ENCODE measurements at regions of chr10 and their contacts with region 1.

Region 1: DNA sequence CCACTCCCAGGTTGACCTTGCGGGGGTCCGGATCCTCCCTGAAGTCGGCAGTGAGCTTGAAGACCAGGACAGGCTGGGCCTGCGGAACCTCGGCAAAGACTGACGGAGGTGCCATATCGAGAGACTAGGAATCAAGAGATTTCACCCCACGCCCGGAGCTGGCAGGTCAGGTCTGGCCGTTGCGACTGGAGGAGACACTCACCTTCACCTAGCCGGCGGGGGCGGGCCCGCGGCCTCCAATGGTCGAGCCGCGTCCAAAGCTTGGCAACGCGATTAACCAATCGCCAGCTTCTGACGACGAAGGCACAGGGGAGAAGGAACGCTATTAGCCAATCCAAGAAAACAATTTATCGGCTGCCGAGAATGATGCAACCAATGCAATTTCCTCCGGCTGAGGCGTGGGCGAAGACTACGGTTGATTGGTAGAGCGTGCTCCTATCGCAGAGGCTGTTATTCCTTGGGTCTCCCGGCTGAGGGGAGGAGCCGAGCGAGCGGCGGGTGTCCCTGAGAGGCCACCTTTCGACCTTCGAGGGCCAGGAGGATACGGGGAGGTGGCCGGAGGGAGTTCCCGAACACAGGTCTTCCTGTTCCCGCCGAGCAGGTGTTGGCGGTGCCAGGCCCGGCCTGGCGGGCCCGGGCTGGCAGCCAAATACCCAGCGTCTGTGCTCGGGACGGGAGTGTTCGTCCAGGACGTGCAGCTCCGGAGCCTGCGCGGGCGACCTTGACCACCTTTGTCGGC is at the start of gene GOT1:
- DNase-seq: peak; percentile 97
- ATAC-seq: peak; percentile 96
- H3K4me3 Mint-ChIP-seq: peak within 1 kb of the TSS; percentile 94
- H3K27ac Mint-ChIP-seq: peak within 1 kb of the TSS; percentile 98
- H3K4me1 Mint-ChIP-seq: peaks cover 32% of the 10 kb centered on the region
- H3K27me3 Mint-ChIP-seq: no peaks in the 10 kb centered on the region
- total RNA-seq, gene GOT1: 51.7 to 83.5 TPM

Region 2: DNA sequence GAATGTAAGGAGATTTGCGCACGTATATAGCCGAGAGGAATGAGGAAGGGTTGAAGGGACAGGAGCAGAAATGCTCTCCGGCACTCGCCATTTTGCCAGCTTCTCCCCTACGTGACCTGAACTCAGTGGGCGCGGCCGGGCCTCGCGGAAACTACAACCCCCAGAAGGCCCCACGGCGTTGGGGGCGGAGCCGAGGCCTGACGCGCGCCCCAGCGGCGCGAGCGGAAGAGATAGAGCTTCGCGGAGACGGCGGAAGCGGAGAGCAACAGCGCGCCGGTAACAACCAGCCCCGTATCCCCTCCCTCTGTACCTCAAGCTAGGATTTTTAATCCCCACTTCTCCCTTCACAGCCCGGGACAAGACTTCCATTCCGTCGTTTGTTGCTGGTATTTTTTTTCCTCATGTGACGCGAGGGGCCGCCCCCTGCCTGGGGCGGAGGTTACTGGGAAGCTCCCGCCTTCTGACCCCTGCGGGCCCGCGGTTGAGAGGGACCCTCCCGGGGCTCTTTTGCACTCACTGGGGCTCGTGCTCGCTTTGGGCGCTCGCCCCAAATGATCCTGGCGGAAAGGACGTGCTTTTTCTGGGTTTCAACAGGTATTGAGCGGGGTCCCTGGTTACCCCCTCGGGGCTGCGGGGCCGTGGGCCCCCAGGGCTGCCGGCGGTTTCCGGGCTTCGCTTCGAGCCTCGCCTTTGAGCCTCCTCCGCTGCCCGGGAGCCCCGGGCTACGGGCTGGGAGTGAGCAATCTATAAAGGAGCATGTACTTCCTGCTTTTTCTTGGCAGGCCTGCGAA is 1296.0 kb before region 1 on chr10 and contains the start of gene R3HCC1L:
- CTCF ChIA-PET with region 1: no interaction called
- POLR2A ChIA-PET with region 1: no interaction called
- intact Hi-C with region 1: loop called in 1 of 2 experiments (anchors 2 kb)
- DNase-seq: peak; percentile 97
- ATAC-seq: peak; percentile 95
- H3K4me3 Mint-ChIP-seq: peak within 1 kb of the TSS; percentile 86
- H3K27ac Mint-ChIP-seq: peak within 1 kb of the TSS; percentile 93
- H3K4me1 Mint-ChIP-seq: peaks cover 44% of the 10 kb centered on the region
- H3K27me3 Mint-ChIP-seq: no peaks in the 10 kb centered on the region
- total RNA-seq, gene R3HCC1L: 13.5 to 16.8 TPM

Region 3: DNA sequence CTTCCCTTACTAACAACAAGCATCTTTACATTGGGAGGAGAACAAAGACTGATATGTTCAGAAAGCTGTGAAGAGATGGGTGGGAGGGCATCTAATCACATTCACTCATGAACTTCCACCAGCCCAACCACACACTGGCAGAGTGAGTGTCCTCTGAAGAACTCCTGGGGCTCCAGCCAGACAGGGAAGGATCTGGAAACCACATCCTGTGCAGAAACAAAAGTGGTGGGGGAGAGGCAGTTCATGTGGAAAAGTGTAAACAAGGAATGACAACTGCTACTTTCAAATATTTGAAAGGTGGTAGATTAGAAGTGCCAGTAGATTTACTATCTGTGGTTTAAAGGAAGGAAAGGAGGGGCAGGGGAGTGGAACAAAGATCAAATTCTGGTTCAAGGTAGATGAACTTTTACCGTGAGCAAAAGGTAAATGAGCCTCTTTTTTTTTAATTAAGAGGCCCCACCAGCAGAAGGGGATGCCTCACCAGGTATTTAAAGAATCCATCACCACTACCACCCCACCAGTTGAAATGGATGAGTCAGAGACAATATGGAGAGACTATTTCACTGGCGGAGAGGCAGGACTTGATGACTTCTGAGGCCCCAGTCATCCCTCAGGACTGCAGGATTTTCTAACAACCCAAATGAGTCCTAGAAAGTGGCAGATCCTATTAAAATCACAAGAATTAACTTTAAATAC is 34.7 kb before region 1 on chr10:
- CTCF ChIA-PET with region 1: interaction called, 7 read pairs
- POLR2A ChIA-PET with region 1: no interaction called
- intact Hi-C with region 1: loop called in 1 of 2 experiments (anchors 2 kb)
- DNase-seq: no peak
- ATAC-seq: no peak
- H3K4me3 Mint-ChIP-seq: no peak overlapping the region
- H3K27ac Mint-ChIP-seq: no peak overlapping the region
- H3K4me1 Mint-ChIP-seq: peaks cover 8% of the 10 kb centered on the region
- H3K27me3 Mint-ChIP-seq: no peaks in the 10 kb centered on the region

Region 4: DNA sequence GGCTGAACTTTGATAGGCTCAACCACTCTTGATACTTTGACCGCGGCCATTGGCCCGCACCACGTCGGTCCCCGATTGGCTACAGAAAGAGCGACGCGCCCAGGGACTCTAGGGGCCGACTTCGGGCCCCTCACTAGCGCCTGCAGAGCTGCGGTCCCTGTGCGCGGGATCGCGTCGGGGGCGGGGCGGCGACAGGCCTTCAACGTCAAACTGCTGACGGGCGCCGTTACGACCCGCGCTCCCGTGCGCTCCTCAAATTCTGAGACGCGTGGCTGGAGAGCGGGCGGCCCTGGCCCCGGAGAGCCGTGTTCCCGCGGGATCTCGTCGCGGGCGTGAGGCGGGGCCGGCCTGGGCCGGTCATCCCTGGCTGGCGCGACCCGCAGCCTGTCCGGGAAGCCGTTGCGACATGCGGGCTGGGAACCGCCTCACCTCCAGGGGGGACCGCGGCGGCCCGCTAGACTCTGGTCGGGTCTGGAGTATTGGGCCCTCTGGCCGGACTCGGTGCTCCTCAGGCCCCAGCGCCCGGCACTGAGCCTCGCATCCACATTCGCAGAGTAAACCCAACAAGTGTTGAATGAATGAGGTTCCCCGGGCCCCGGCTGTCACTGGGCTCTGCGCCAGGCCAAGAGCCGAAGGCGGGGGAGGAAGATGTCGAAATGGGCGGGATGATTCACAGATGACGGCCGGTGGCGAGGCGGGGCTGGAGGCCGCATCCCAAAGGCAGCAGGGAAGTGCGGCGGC is 190.3 kb after region 1 on chr10:
- CTCF ChIA-PET with region 1: interaction called, 26 read pairs
- POLR2A ChIA-PET with region 1: interaction called, 9 read pairs
- intact Hi-C with region 1: loop called (anchors 1 kb)
- DNase-seq: peak; percentile 94
- ATAC-seq: peak; percentile 89
- H3K4me3 Mint-ChIP-seq: peak overlapping the region; percentile 96
- H3K27ac Mint-ChIP-seq: peak overlapping the region; percentile 96
- H3K4me1 Mint-ChIP-seq: peaks cover 39% of the 10 kb centered on the region
- H3K27me3 Mint-ChIP-seq: no peaks in the 10 kb centered on the region

Region 5: GRCh38 chr10:99711129-99711719 is 280.6 kb after region 1 on chr10:
- CTCF ChIA-PET with region 1: interaction called, 6 read pairs
- POLR2A ChIA-PET with region 1: no interaction called
- intact Hi-C with region 1: loop called in 1 of 2 experiments (anchors 1 kb)
- DNase-seq: peak; percentile 57
- ATAC-seq: peak; percentile 63
- H3K4me3 Mint-ChIP-seq: no peak overlapping the region
- H3K27ac Mint-ChIP-seq: no peak overlapping the region
- H3K4me1 Mint-ChIP-seq: peaks cover 15% of the 10 kb centered on the region
- H3K27me3 Mint-ChIP-seq: no peaks in the 10 kb centered on the region